ENCODE measurements at regions of chr11 and their contacts with region 1.

Region 1: GRCh38 chr11:118757876-118758399 is 33.0 kb downstream of the DDX6 start:
- DNase-seq: no peak
- H3K4me3 Mint-ChIP-seq: no peak overlapping the region
- H3K27ac Mint-ChIP-seq: no peak overlapping the region
- H3K4me1 Mint-ChIP-seq: peaks cover 3% of the 10 kb centered on the region
- H3K27me3 Mint-ChIP-seq: no peaks in the 10 kb centered on the region

Region 2: DNA sequence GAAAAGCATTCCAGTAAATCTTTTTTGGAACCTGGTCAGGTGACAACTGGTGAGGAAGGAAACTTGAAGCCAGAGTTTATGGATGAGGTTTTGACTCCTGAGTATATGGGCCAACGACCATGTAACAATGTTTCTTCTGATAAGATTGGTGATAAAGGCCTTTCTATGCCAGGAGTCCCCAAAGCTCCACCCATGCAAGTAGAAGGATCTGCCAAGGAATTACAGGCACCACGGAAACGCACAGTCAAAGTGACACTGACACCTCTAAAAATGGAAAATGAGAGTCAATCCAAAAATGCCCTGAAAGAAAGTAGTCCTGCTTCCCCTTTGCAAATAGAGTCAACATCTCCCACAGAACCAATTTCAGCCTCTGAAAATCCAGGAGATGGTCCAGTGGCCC is 254.7 kb before region 1 on chr11:
- intact Hi-C with region 1: loop called (anchors 10 kb)
- DNase-seq: no peak
- H3K4me3 Mint-ChIP-seq: no peak overlapping the region
- H3K27ac Mint-ChIP-seq: peak overlapping the region; percentile 17
- H3K4me1 Mint-ChIP-seq: no peaks in the 10 kb centered on the region
- H3K27me3 Mint-ChIP-seq: no peaks in the 10 kb centered on the region